CD8-positive, alpha-beta T cell (primary cell): ENCODE measurements at regions of chr7 and their contacts with region 1.

Region 1: DNA sequence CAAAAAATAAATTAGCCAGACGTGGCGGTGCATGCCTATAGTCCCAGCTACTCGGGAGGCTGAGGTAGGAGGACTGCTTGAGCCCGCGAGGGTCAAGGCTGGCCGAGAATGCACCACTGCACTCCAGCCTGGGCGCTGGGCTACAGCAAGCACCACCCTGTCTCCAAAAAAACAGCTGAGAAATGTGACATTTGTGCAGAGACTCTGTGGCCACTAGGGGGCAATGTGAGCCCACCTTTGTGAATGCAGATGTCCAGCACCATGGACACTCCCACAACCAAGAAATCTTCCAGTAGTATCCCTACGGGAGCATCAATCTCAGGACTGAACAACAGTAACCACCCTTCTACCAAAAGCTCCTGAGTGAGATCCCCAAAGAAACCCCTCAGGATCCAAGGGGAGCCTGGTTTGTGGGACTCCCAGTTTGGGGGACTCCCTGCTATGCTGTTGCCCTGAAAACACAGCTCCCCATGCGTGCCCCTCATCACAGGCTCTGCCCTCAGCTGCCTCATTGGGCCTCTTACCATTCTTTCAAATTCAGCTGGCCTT is 6.2 kb upstream of the AHCYL2 start:
- DNase-seq: peak; percentile 48 to 87 (median 80)
- ATAC-seq: peak; percentile 91
- H3K4me3 ChIP-seq: no peak overlapping the region
- H3K4me3 Mint-ChIP-seq: no peak overlapping the region
- H3K27ac ChIP-seq: no peak overlapping the region
- H3K27ac Mint-ChIP-seq: no peak overlapping the region
- H3K4me1 ChIP-seq: peaks cover 12% of the 10 kb centered on the region
- H3K4me1 Mint-ChIP-seq: peaks cover 13% of the 10 kb centered on the region
- H3K27me3 ChIP-seq: no peaks in the 10 kb centered on the region
- H3K27me3 Mint-ChIP-seq: peaks cover 4% of the 10 kb centered on the region
- CTCF ChIP-seq: peak; percentile 94

Region 2: DNA sequence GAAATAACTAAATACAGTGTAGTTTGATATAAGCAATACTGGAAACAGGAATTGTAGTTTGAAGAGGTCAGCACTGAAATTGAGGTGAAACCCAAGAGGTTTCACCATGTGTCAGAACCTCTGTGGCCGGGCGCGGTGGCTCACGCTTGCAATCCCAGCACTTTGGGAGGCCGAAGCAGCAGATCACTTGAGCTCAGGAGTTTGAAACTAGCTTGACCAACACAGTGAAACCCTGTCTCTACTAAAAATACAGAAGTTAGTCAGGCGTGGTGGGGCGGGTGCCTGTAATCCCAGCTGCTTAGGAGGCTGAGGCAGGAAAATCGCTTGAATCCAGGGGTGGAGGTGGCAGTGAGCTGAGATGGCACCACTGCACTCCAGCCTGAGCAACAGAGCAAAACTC is 20.0 kb after region 1 on chr7:
- CTCF ChIA-PET with region 1: interaction called, 51 read pairs
- POLR2A ChIA-PET with region 1: no interaction called
- intact Hi-C with region 1: no loop called
- DNase-seq: no peak
- ATAC-seq: no peak
- H3K4me3 ChIP-seq: no peak overlapping the region
- H3K4me3 Mint-ChIP-seq: no peak overlapping the region
- H3K27ac ChIP-seq: no peak overlapping the region
- H3K27ac Mint-ChIP-seq: no peak overlapping the region
- H3K4me1 ChIP-seq: no peaks in the 10 kb centered on the region
- H3K4me1 Mint-ChIP-seq: peaks cover 26% of the 10 kb centered on the region
- H3K27me3 ChIP-seq: no peaks in the 10 kb centered on the region
- H3K27me3 Mint-ChIP-seq: no peaks in the 10 kb centered on the region
- CTCF ChIP-seq: no peak

Region 3: GRCh38 chr7:129258649-129259389 is 40.2 kb after region 1 on chr7:
- CTCF ChIA-PET with region 1: interaction called, 37 read pairs
- POLR2A ChIA-PET with region 1: interaction called, 4 read pairs
- intact Hi-C with region 1: no loop called
- DNase-seq: peak in 1 of 9 experiments; percentile 19
- ATAC-seq: no peak
- H3K4me3 ChIP-seq: no peak overlapping the region
- H3K4me3 Mint-ChIP-seq: peak overlapping the region; percentile 70
- H3K27ac ChIP-seq: no peak overlapping the region
- H3K27ac Mint-ChIP-seq: no peak overlapping the region
- H3K4me1 ChIP-seq: peaks cover 10% of the 10 kb centered on the region
- H3K4me1 Mint-ChIP-seq: peaks cover 33% of the 10 kb centered on the region
- H3K27me3 ChIP-seq: no peaks in the 10 kb centered on the region
- H3K27me3 Mint-ChIP-seq: no peaks in the 10 kb centered on the region
- CTCF ChIP-seq: no peak

Region 4: DNA sequence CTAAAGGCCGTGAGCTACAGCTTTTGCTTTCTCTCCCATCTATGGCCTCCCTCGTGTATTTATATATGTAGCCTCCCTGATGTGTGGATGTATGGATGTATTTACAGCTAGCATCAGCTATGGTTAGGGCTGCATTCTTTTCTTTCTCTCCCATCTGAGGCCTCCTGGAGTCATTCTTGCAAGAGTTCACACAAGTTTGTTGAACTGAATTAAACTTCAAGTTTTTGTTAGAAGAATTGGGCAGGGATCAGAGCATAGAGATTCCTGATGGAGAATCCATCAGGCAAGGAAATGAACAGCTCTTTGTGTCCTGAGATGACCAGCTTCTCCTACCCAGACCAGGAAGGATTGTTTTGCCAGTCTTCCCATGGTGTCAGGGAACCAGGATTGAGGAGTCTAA is 66.5 kb after region 1 on chr7:
- CTCF ChIA-PET with region 1: interaction called, 20 read pairs
- POLR2A ChIA-PET with region 1: no interaction called
- intact Hi-C with region 1: no loop called
- DNase-seq: no peak
- ATAC-seq: no peak
- H3K4me3 ChIP-seq: no peak overlapping the region
- H3K4me3 Mint-ChIP-seq: no peak overlapping the region
- H3K27ac ChIP-seq: no peak overlapping the region
- H3K27ac Mint-ChIP-seq: no peak overlapping the region
- H3K4me1 ChIP-seq: no peaks in the 10 kb centered on the region
- H3K4me1 Mint-ChIP-seq: peaks cover 2% of the 10 kb centered on the region
- H3K27me3 ChIP-seq: no peaks in the 10 kb centered on the region
- H3K27me3 Mint-ChIP-seq: no peaks in the 10 kb centered on the region
- CTCF ChIP-seq: no peak

Region 5: GRCh38 chr7:129376076-129376777 is 157.6 kb after region 1 on chr7:
- CTCF ChIA-PET with region 1: interaction called, 16 read pairs
- POLR2A ChIA-PET with region 1: no interaction called
- intact Hi-C with region 1: loop called in 1 of 2 experiments (anchors 10 kb)
- DNase-seq: peak in 8 of 9 experiments; percentile 5 to 61 (median 38)
- ATAC-seq: peak; percentile 67
- H3K4me3 ChIP-seq: no peak overlapping the region
- H3K4me3 Mint-ChIP-seq: no peak overlapping the region
- H3K27ac ChIP-seq: no peak overlapping the region
- H3K27ac Mint-ChIP-seq: no peak overlapping the region
- H3K4me1 ChIP-seq: no peaks in the 10 kb centered on the region
- H3K4me1 Mint-ChIP-seq: peaks cover 6% of the 10 kb centered on the region
- H3K27me3 ChIP-seq: no peaks in the 10 kb centered on the region
- H3K27me3 Mint-ChIP-seq: no peaks in the 10 kb centered on the region
- CTCF ChIP-seq: peak; percentile 70